H1 (cell line): ENCODE measurements at regions of chr12 and their contacts with region 1.

Region 1: GRCh38 chr12:48061948-48062719 is 43.7 kb downstream of the SENP1 start:
- DNase-seq: no peak
- H3K4me3 ChIP-seq: no peak overlapping the region
- H3K27ac ChIP-seq: no peak overlapping the region
- H3K4me1 ChIP-seq: no peaks in the 10 kb centered on the region
- H3K27me3 ChIP-seq: no peaks in the 10 kb centered on the region
- CTCF ChIP-seq: peak in 2 of 3 experiments; percentile 34 to 40; a peak in 2 of 4 replicates
- EP300 ChIP-seq: no peak
- POLR2A ChIP-seq: no peak
- RAD21 ChIP-seq: peak; percentile 57 to 70

Region 2: DNA sequence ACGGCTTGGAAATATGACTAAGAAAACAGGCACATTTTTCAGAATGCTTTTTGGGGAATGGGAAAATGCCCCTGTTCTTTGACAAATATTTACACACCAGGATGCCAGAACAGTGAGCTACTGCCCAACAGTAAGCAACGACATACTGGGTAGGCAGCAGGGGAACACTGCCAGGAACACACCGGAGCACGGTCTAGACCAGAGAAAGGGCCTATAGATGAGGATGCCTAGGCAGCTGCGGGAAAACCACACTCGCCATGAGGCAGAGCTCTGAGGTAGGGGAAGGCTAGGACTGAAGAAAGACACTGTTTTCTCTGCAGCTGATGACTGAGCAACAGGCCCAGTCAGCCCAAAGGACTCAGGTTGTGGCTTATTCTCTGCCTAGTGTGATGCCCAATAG is 12.0 kb before region 1 on chr12:
- CTCF ChIA-PET with region 1: interaction called, 18 read pairs
- POLR2A ChIA-PET with region 1: no interaction called
- DNase-seq: no peak
- H3K4me3 ChIP-seq: no peak overlapping the region
- H3K27ac ChIP-seq: no peak overlapping the region
- H3K4me1 ChIP-seq: no peaks in the 10 kb centered on the region
- H3K27me3 ChIP-seq: no peaks in the 10 kb centered on the region
- CTCF ChIP-seq: no peak
- EP300 ChIP-seq: no peak
- POLR2A ChIP-seq: no peak
- RAD21 ChIP-seq: no peak

Region 3: DNA sequence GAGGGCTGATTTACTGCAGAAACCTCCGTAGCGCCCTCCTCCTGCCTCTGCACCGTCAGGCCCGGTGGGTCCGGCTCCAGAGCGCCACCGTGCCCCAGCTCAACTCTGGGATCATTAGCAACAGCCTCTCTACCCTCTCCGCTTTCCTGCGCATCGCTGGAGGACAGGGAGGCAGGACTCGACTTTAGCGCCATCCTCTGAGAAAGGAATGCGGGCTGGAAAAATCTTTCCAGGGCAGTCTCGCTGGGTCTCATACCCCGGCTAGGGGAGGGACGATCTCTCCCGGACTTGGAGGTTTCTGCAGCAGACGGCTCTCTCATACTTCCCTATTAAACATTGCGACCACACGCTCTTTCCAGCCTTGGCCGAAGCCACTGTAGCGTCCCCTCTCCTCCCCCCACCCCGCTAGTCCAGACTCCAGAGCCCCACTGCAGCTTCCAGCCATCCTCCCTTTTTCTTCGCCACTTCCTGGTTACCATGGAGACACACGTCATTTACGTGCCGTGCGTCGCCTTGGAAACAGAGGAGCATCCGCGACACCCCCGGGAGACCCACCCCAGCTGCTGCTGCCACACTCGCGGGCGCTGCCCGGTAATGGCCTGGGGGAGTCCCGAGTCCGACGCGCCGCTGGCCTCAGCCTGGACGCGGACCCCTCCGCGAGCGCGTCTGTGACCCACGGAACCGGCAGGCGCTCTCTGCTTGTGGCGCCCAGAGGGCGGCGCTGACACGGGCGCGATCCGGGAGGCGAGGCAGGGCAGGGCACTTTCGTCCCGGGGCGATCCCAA is 121.1 kb after region 1 on chr12 and contains the start of gene CCDC184:
- CTCF ChIA-PET with region 1: no interaction called
- POLR2A ChIA-PET with region 1: no interaction called
- DNase-seq: peak in 1 of 2 experiments; percentile 83
- H3K4me3 ChIP-seq: peak within 1 kb of the TSS; percentile 35 to 80 (median 72)
- H3K27ac ChIP-seq: 0 out of 2 replicates have a peak within 1 kb of the TSS, but pooled peaks have one; percentile 31
- H3K4me1 ChIP-seq: peaks cover 6 to 20% (median 11%) of the 10 kb centered on the region in 4 experiments; a peak in 6 of 7 replicates
- H3K27me3 ChIP-seq: peaks cover 8 to 39% (median 25%) of the 10 kb centered on the region in 4 experiments
- CTCF ChIP-seq: peak; percentile 34 to 44 (median 35)
- EP300 ChIP-seq: no peak
- POLR2A ChIP-seq: peak in 1 of 2 experiments; percentile 36; a peak in 1 of 3 replicates
- RAD21 ChIP-seq: peak in 1 of 2 experiments; percentile 41; a peak in 3 of 4 replicates
- total RNA-seq, gene CCDC184: 2.2 and 2.5 TPM in 2 replicates

Region 4: DNA sequence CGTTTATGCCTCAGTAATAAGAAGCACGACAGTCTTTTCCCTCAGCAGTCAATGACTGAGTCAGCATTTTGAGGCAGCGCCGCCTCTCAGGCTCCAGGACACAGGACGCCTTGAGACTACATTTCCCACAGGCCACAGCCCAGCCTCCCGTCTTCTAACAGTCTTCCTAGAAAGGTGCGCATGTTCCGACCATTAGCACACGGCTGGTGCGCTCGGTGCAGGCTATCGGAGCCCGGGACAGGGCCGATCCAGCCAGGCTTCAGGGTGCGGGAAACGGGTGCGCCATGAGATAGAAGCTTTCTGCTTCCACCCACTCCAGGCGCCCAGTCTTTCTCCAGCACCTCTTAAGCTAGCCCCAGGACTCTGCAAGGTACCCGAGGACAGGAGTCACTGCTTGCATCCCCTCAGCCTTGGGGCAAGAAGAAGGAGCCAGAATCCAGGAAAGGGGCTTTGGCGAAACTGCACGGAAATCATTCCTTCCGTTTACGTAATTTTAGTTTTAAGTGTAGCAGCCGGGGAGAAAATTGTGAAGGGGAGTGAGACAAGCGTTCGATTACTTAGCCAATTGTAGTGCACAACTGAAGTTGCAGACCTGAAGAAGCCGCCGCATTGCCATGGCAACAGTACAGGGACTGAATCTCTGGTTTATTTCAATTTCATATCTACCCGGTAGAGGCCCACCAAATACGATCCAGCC is 234.6 kb after region 1 on chr12:
- CTCF ChIA-PET with region 1: no interaction called
- POLR2A ChIA-PET with region 1: no interaction called
- DNase-seq: peak; percentile 47 to 70
- H3K4me3 ChIP-seq: peak overlapping the region; percentile 36 to 63 (median 49)
- H3K27ac ChIP-seq: no peak overlapping the region
- H3K4me1 ChIP-seq: no peaks in the 10 kb centered on the region; a peak in 1 of 7 replicates
- H3K27me3 ChIP-seq: no peaks in the 10 kb centered on the region
- CTCF ChIP-seq: no peak
- EP300 ChIP-seq: no peak
- POLR2A ChIP-seq: peak in 1 of 2 experiments; percentile 32; a peak in 1 of 3 replicates
- RAD21 ChIP-seq: no peak